ENCODE measurements at regions of chr16 and their contacts with region 1.

Region 1: GRCh38 chr16:68448360-68448970 is at the start of gene SMPD3:
- DNase-seq: peak; percentile 97
- ATAC-seq: peak; percentile 99
- H3K4me3 ChIP-seq: peak within 1 kb of the TSS; percentile 30
- H3K27ac ChIP-seq: no peak within 1 kb of the TSS
- H3K4me1 ChIP-seq: peaks cover 7% of the 10 kb centered on the region
- H3K27me3 ChIP-seq: peaks cover 10% of the 10 kb centered on the region
- CTCF ChIP-seq: no peak
- POLR2A ChIP-seq: no peak
- RAD21 ChIP-seq: no peak
- total RNA-seq, gene SMPD3: not detected in 2 replicates

Region 2: GRCh38 chr16:68382296-68382718 is 66.2 kb before region 1 on chr16:
- CTCF ChIA-PET with region 1: no interaction called
- POLR2A ChIA-PET with region 1: no interaction called
- dilution Hi-C with region 1: no loop called
- in situ Hi-C with region 1: no loop called
- intact Hi-C with region 1: no loop called
- DNase-seq: no peak
- ATAC-seq: no peak
- H3K4me3 ChIP-seq: no peak overlapping the region
- H3K27ac ChIP-seq: no peak overlapping the region
- H3K4me1 ChIP-seq: no peaks in the 10 kb centered on the region
- H3K27me3 ChIP-seq: peaks cover 48% of the 10 kb centered on the region
- CTCF ChIP-seq: no peak
- POLR2A ChIP-seq: no peak
- RAD21 ChIP-seq: no peak

Region 3: GRCh38 chr16:68470461-68471150 is 22.1 kb after region 1 on chr16:
- CTCF ChIA-PET with region 1: interaction called, 10 read pairs
- POLR2A ChIA-PET with region 1: no interaction called
- dilution Hi-C with region 1: no loop called
- in situ Hi-C with region 1: no loop called
- intact Hi-C with region 1: no loop called
- DNase-seq: no peak
- ATAC-seq: no peak
- H3K4me3 ChIP-seq: no peak overlapping the region
- H3K27ac ChIP-seq: no peak overlapping the region
- H3K4me1 ChIP-seq: no peaks in the 10 kb centered on the region
- H3K27me3 ChIP-seq: peaks cover 46% of the 10 kb centered on the region
- CTCF ChIP-seq: no peak
- POLR2A ChIP-seq: no peak
- RAD21 ChIP-seq: no peak

Region 4: GRCh38 chr16:68538880-68539701 is 90.6 kb after region 1 on chr16 and contains the start of gene ZFP90:
- CTCF ChIA-PET with region 1: no interaction called
- POLR2A ChIA-PET with region 1: no interaction called
- dilution Hi-C with region 1: no loop called
- in situ Hi-C with region 1: no loop called
- intact Hi-C with region 1: no loop called
- DNase-seq: peak; percentile 78
- ATAC-seq: peak; percentile 98
- H3K4me3 ChIP-seq: peak within 1 kb of the TSS; percentile 55
- H3K27ac ChIP-seq: peak within 1 kb of the TSS; percentile 70
- H3K4me1 ChIP-seq: peaks cover 3% of the 10 kb centered on the region; the same call in 1 of the 2 replicates
- H3K27me3 ChIP-seq: no peaks in the 10 kb centered on the region
- CTCF ChIP-seq: no peak
- POLR2A ChIP-seq: no peak
- RAD21 ChIP-seq: no peak
- total RNA-seq, gene ZFP90: 17.2 and 22.6 TPM in 2 replicates